ENCODE measurements at regions of chr6 and their contacts with region 1.

Region 1: GRCh38 chr6:115896538-115897129 is 164.1 kb downstream of the FRK start:
- DNase-seq: peak in 1 of 4 donors; percentile 49
- ATAC-seq: peak; percentile 74
- H3K4me3 ChIP-seq: no peak overlapping the region
- H3K27ac ChIP-seq: no peak overlapping the region
- H3K4me1 ChIP-seq: no peaks in the 10 kb centered on the region
- H3K27me3 ChIP-seq: no peaks in the 10 kb centered on the region
- CTCF ChIP-seq: peak; percentile 35 to 58

Region 2: GRCh38 chr6:114747987-114748630 is 1148.5 kb before region 1 on chr6:
- intact Hi-C with region 1: loop called in 1 of 2 experiments (anchors 10 kb)
- DNase-seq: peak in 2 of 4 donors; percentile 51 to 65
- ATAC-seq: peak; percentile 27
- H3K4me3 ChIP-seq: no peak overlapping the region
- H3K27ac ChIP-seq: no peak overlapping the region
- H3K4me1 ChIP-seq: no peaks in the 10 kb centered on the region
- H3K27me3 ChIP-seq: no peaks in the 10 kb centered on the region
- CTCF ChIP-seq: peak; percentile 32 to 68

Region 3: GRCh38 chr6:115753446-115753845 is 143.2 kb before region 1 on chr6:
- intact Hi-C with region 1: no loop called
- DNase-seq: no peak
- ATAC-seq: no peak
- H3K4me3 ChIP-seq: no peak overlapping the region
- H3K27ac ChIP-seq: no peak overlapping the region
- H3K4me1 ChIP-seq: no peaks in the 10 kb centered on the region
- H3K27me3 ChIP-seq: no peaks in the 10 kb centered on the region
- CTCF ChIP-seq: no peak

Measured in left lung (tissue), 14 donors.